ENCODE measurements at regions of chr3 and their contacts with region 1.

Region 1: GRCh38 chr3:186821429-186822367 is 15.4 kb upstream of the RFC4 start:
- DNase-seq: no peak
- H3K4me3 ChIP-seq: no peak overlapping the region
- H3K27ac ChIP-seq: no peak overlapping the region
- H3K4me1 ChIP-seq: peaks cover 7 to 23% (median 19%) of the 10 kb centered on the region in 4 experiments
- H3K27me3 ChIP-seq: peaks cover 0 to 23% (median 14%) of the 10 kb centered on the region in 4 experiments; a peak in 5 of 7 replicates
- CTCF ChIP-seq: peak in 2 of 3 experiments; percentile 41 to 57; a peak in 2 of 4 replicates
- EP300 ChIP-seq: no peak
- POLR2A ChIP-seq: no peak
- RAD21 ChIP-seq: peak; percentile 73 to 78

Region 2: DNA sequence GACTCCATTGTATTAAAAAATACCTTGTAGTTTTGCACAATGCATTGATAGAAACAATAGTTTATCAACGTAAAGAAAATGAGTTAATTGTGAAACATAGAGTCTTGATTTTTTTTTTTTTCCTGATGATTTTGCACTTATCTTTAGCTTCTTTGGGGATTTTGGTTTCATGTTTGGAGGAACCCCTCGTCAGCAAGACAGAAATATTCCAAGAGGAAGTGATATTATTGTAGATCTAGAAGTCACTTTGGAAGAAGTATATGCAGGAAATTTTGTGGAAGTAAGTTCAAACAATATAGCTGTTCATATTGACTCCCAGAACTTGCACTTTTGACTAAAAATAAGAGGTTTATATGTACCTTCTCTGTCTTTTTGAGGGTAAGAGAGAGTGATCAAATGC is 244.2 kb before region 1 on chr3:
- CTCF ChIA-PET with region 1: no interaction called
- POLR2A ChIA-PET with region 1: no interaction called
- DNase-seq: no peak
- H3K4me3 ChIP-seq: no peak overlapping the region
- H3K27ac ChIP-seq: no peak overlapping the region
- H3K4me1 ChIP-seq: no peaks in the 10 kb centered on the region
- H3K27me3 ChIP-seq: no peaks in the 10 kb centered on the region
- CTCF ChIP-seq: no peak
- EP300 ChIP-seq: no peak
- POLR2A ChIP-seq: no peak
- RAD21 ChIP-seq: no peak

Region 3: DNA sequence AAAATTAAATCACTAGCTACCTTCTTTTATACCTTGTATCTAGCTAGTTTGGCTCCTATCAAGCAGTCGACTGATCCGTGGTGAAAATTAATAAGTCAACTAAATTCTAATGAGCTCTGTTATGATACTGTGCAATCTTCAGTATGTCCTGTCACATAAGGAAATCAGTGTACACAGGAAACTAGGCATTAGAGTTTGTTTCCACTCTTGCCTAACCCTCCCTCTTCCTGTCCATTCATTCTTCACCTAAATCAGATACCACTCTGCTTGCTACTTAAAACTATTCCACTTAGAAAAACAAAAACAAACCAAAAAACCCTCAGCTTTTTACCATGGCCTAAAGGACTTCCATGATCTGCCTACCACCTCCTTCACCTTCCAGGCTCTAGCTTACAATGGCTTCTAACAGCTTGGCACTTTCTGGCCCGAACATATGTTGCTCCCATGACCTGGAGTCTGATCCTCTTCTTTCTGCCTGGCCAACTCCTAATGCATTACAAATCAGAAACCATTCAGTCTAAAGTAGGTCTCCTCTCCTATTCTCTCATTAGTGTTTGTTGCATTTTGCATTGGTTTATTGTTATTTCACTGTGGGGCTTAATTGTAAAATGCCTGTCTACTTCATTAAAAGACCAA is 23.3 kb before region 1 on chr3:
- CTCF ChIA-PET with region 1: interaction called, 11 read pairs
- POLR2A ChIA-PET with region 1: interaction called, 6 read pairs
- DNase-seq: no peak
- H3K4me3 ChIP-seq: no peak overlapping the region
- H3K27ac ChIP-seq: no peak overlapping the region
- H3K4me1 ChIP-seq: no peaks in the 10 kb centered on the region
- H3K27me3 ChIP-seq: no peaks in the 10 kb centered on the region
- CTCF ChIP-seq: no peak
- EP300 ChIP-seq: no peak
- POLR2A ChIP-seq: no peak
- RAD21 ChIP-seq: no peak

Region 4: GRCh38 chr3:186923241-186923640 is 101.5 kb after region 1 on chr3:
- CTCF ChIA-PET with region 1: no interaction called
- POLR2A ChIA-PET with region 1: no interaction called
- DNase-seq: peak in 1 of 2 experiments; percentile 16
- H3K4me3 ChIP-seq: no peak overlapping the region
- H3K27ac ChIP-seq: no peak overlapping the region
- H3K4me1 ChIP-seq: no peaks in the 10 kb centered on the region
- H3K27me3 ChIP-seq: no peaks in the 10 kb centered on the region; a peak in 1 of 7 replicates
- CTCF ChIP-seq: no peak
- EP300 ChIP-seq: no peak
- POLR2A ChIP-seq: no peak
- RAD21 ChIP-seq: no peak

Measured in H1 (cell line).